ENCODE measurements at regions of chr18 and their contacts with region 1.

Region 1: GRCh38 chr18:48675352-48675761 is 136.5 kb downstream of the CTIF start:
- DNase-seq: peak; percentile 81
- H3K4me3 ChIP-seq: no peak overlapping the region
- H3K27ac ChIP-seq: no peak overlapping the region
- H3K4me1 ChIP-seq: no peaks in the 10 kb centered on the region
- H3K27me3 ChIP-seq: no peaks in the 10 kb centered on the region
- CTCF ChIP-seq: peak; percentile 85 to 94 (median 88)
- POLR2A ChIP-seq: no peak

Region 2: GRCh38 chr18:47438001-47438400 is 1237.4 kb before region 1 on chr18:
- intact Hi-C with region 1: no loop called
- DNase-seq: no peak
- H3K4me3 ChIP-seq: no peak overlapping the region
- H3K27ac ChIP-seq: no peak overlapping the region
- H3K4me1 ChIP-seq: no peaks in the 10 kb centered on the region
- H3K27me3 ChIP-seq: no peaks in the 10 kb centered on the region
- CTCF ChIP-seq: no peak
- POLR2A ChIP-seq: no peak

Region 3: GRCh38 chr18:48735080-48735676 is 59.8 kb after region 1 on chr18:
- intact Hi-C with region 1: no loop called
- DNase-seq: no peak
- H3K4me3 ChIP-seq: no peak overlapping the region
- H3K27ac ChIP-seq: no peak overlapping the region
- H3K4me1 ChIP-seq: no peaks in the 10 kb centered on the region
- H3K27me3 ChIP-seq: no peaks in the 10 kb centered on the region
- CTCF ChIP-seq: no peak
- POLR2A ChIP-seq: no peak

Region 4: DNA sequence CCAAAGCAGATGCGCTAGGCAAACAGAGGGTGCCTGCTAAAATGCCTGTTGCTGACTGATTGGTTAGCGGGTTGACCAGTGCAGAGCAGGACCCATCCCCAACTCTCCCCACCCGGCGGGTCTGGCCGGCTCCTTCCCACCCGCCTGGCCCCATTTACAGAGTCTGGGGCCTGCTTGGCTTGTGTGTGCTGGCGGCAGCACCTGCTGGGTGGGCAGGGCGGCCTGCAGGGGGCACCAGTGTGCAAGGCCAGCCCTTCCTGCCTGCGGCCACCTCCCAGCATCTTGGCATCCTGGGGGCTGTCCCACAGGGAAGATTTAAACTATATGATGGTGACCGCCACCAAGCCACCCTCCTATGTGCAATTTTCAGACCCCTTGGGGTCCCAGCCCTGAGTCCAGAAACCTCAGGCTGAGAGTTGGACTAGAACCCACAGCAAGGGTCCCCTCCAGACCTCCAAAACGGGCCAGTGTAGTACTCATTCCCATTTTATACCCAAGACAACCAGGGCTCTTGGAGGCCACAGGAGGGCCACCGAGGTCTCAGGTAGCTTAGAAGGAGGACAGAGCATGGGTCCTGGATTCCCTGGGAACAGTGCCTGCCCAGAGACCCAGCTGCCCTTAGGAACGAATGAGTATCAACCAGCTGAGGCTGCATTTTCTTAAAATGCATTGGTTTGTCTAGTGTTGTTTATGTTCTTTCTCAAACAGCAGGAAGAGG is 101.8 kb after region 1 on chr18:
- intact Hi-C with region 1: loop called (anchors 5 kb)
- DNase-seq: peak; percentile 40
- H3K4me3 ChIP-seq: no peak overlapping the region
- H3K27ac ChIP-seq: no peak overlapping the region
- H3K4me1 ChIP-seq: peaks cover 5% of the 10 kb centered on the region
- H3K27me3 ChIP-seq: no peaks in the 10 kb centered on the region
- CTCF ChIP-seq: peak; percentile 72 to 87 (median 78)
- POLR2A ChIP-seq: no peak

Region 5: DNA sequence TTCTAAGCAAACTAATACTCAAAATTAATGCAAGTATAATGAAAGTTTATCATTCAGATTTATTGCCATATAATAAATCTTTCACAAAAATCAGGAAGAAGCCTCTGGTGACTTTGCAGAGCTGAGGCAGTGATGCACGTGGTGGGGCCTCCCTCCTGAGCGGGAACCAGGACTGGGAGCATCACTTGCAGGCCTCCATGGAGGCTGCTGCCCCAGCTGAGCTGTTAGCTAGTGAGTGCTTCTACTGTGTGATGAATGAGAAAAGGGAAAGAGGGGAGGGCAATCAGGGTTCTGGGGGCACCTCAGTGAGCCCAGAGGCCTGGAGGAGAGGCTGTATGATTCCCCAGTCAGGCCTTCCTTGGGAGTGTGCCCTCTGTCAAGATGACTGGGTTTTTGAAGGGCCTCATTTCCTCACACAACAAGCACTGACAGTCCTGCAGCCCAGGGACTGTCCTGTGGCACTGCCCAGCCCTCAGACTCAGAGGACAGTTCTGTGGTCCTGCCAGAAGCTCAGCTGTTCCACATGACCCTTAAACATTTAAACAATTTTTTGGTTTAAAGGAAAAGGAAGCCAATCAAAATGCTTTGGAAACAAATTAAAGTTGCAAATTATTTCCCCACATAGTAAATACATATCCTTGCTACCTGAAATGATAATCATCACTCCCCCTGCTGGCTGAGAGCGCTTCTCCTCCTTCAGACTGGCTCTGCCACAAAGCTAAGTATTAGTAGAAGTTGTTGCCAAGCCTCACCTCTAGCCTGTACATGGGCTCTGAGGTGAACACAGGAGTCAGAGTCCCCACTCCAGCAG is 366.3 kb after region 1 on chr18:
- intact Hi-C with region 1: loop called (anchors 5 kb)
- DNase-seq: peak; percentile 78
- H3K4me3 ChIP-seq: no peak overlapping the region
- H3K27ac ChIP-seq: no peak overlapping the region
- H3K4me1 ChIP-seq: no peaks in the 10 kb centered on the region
- H3K27me3 ChIP-seq: no peaks in the 10 kb centered on the region
- CTCF ChIP-seq: peak; percentile 48 to 80 (median 70)
- POLR2A ChIP-seq: no peak

Region 6: GRCh38 chr18:49238433-49239042 is 563.2 kb after region 1 on chr18:
- intact Hi-C with region 1: loop called (anchors 5 kb)
- DNase-seq: no peak
- H3K4me3 ChIP-seq: no peak overlapping the region
- H3K27ac ChIP-seq: no peak overlapping the region
- H3K4me1 ChIP-seq: no peaks in the 10 kb centered on the region
- H3K27me3 ChIP-seq: no peaks in the 10 kb centered on the region
- CTCF ChIP-seq: peak in 2 of 4 experiments; percentile 28 to 38
- POLR2A ChIP-seq: no peak

Region 7: DNA sequence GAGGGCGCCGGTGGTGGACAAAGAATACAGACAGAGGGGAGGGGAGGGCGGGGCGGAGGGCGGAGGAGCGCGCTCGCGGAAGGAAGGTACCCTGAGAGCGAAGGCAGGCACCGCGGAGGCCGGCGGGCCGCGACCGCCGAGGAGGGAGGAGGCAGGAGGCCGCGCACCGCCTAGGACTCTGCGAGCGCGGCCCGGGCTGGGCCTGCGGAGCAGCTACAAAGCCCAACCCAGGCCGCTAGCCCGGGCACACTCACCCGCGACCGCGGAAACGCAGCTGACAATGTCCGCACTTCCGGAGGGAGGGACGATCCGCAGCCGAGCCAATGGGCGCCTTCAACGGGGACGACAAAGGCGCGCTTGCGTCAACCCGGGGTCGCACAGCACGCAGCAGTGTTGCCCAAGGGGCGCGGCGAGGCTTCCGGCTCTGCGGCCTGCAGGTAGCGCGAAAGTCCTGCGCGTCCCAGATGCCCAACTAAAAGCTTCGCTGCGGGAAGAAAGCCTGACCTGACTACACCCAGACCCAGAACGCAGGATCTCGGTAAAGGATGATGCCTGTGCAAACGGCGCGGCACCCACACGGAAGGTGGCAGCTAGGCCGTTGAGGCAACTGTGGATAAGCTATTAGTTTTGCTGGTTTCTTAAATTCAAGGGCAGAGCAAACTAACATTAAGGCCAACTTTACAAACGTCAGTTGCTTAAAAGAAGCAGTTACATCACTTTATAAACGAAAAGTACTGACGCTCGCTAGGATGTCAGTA is 811.8 kb after region 1 on chr18 and contains the start of gene C18orf32:
- intact Hi-C with region 1: loop called (anchors 5 kb)
- DNase-seq: peak; percentile 90
- H3K4me3 ChIP-seq: peak within 1 kb of the TSS; percentile 74 to 82
- H3K27ac ChIP-seq: peak within 1 kb of the TSS; percentile 94 to 95
- H3K4me1 ChIP-seq: peaks cover 4% of the 10 kb centered on the region
- H3K27me3 ChIP-seq: no peaks in the 10 kb centered on the region
- CTCF ChIP-seq: no peak
- POLR2A ChIP-seq: peak; percentile 91
- total RNA-seq, gene C18orf32: 37.1 to 56.6 TPM

Measured in prostate gland (tissue), 2 donors.